GM12878 (cell line): ENCODE measurements at regions of chr1 and their contacts with region 1.

Region 1: GRCh38 chr1:9037476-9038337 is 11.5 kb upstream of the SLC2A7 start:
- DNase-seq: peak; percentile 56
- ATAC-seq: peak; percentile 89
- H3K4me3 ChIP-seq: no peak overlapping the region
- H3K27ac ChIP-seq: peak overlapping the region; percentile 89
- H3K4me1 ChIP-seq: peaks cover 27% of the 10 kb centered on the region
- H3K27me3 ChIP-seq: no peaks in the 10 kb centered on the region
- CTCF ChIP-seq: no peak
- EP300 ChIP-seq: peak; percentile 50 to 76; a peak in 3 of 4 replicates
- POLR2A ChIP-seq: peak; percentile 30; the same call in 1 of the 2 replicates
- RAD21 ChIP-seq: no peak

Region 2: GRCh38 chr1:9061252-9061960 is 23.7 kb after region 1 on chr1:
- CTCF ChIA-PET with region 1: interaction called, 4 read pairs
- POLR2A ChIA-PET with region 1: interaction called, 4 read pairs
- RAD21 ChIA-PET with region 1: interaction called, 10 read pairs
- SMC1A ChIA-PET with region 1: interaction called, 8 read pairs
- in situ Hi-C with region 1: no loop called
- intact Hi-C with region 1: no loop called
- DNase-seq: no peak
- ATAC-seq: peak; percentile 64
- H3K4me3 ChIP-seq: no peak overlapping the region
- H3K27ac ChIP-seq: peak overlapping the region; percentile 2; the same call in 1 of the 2 replicates
- H3K4me1 ChIP-seq: peaks cover 24% of the 10 kb centered on the region
- H3K27me3 ChIP-seq: no peaks in the 10 kb centered on the region
- CTCF ChIP-seq: no peak
- EP300 ChIP-seq: no peak
- POLR2A ChIP-seq: no peak
- RAD21 ChIP-seq: no peak